ENCODE measurements at regions of chr5 and their contacts with region 1.

Region 1: GRCh38 chr5:32232441-32233219 is 58.5 kb upstream of the GOLPH3 start:
- DNase-seq: peak; percentile 67 to 80
- H3K4me3 ChIP-seq: no peak overlapping the region
- H3K4me3 Mint-ChIP-seq: no peak overlapping the region
- H3K27ac Mint-ChIP-seq: peak overlapping the region; percentile 64
- H3K4me1 ChIP-seq: peaks cover 40% of the 10 kb centered on the region
- H3K4me1 Mint-ChIP-seq: peaks cover 44% of the 10 kb centered on the region
- H3K27me3 ChIP-seq: no peaks in the 10 kb centered on the region
- H3K27me3 Mint-ChIP-seq: no peaks in the 10 kb centered on the region
- CTCF ChIP-seq: peak; percentile 73 to 81

Region 2: DNA sequence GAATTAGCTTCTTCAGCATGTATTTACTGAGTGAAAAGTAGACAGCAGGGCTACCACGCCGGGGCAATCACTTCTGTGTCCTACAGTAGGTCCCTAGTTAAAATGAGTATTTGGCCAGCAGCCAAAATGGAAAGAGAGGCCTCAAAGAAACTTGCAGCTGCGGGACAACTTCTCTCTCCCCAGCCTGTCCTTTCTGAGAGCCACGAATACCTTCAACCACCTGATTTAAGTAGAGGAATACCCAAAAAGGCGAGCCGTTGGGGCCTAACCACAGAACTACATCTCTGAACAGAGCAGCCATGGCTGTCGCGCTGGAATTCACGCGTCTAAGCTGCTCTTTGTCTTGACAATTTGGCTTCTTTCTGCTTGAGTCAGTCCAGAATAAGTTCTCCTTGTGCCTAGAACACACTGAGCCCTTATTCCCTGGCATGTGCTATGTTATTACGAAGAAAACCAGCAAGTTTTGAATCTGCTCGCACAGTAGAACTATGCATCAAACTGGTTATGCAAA is 14.7 kb before region 1 on chr5:
- CTCF ChIA-PET with region 1: no interaction called
- POLR2A ChIA-PET with region 1: no interaction called
- intact Hi-C with region 1: loop called (anchors 1 kb)
- DNase-seq: no peak
- H3K4me3 ChIP-seq: no peak overlapping the region
- H3K4me3 Mint-ChIP-seq: no peak overlapping the region
- H3K27ac Mint-ChIP-seq: no peak overlapping the region
- H3K4me1 ChIP-seq: peaks cover 4% of the 10 kb centered on the region
- H3K4me1 Mint-ChIP-seq: peaks cover 6% of the 10 kb centered on the region
- H3K27me3 ChIP-seq: no peaks in the 10 kb centered on the region
- H3K27me3 Mint-ChIP-seq: no peaks in the 10 kb centered on the region
- CTCF ChIP-seq: no peak

Region 3: GRCh38 chr5:32249646-32250045 is 17.0 kb after region 1 on chr5:
- CTCF ChIA-PET with region 1: interaction called, 10 read pairs
- POLR2A ChIA-PET with region 1: no interaction called
- intact Hi-C with region 1: loop called (anchors 1 kb)
- DNase-seq: peak; percentile 83 to 85
- H3K4me3 ChIP-seq: no peak overlapping the region
- H3K4me3 Mint-ChIP-seq: peak overlapping the region; percentile 65
- H3K27ac Mint-ChIP-seq: peak overlapping the region; percentile 87
- H3K4me1 ChIP-seq: peaks cover 28% of the 10 kb centered on the region
- H3K4me1 Mint-ChIP-seq: peaks cover 37% of the 10 kb centered on the region
- H3K27me3 ChIP-seq: no peaks in the 10 kb centered on the region
- H3K27me3 Mint-ChIP-seq: no peaks in the 10 kb centered on the region
- CTCF ChIP-seq: no peak

Region 4: GRCh38 chr5:32274548-32275395 is 42.1 kb after region 1 on chr5:
- CTCF ChIA-PET with region 1: no interaction called
- POLR2A ChIA-PET with region 1: interaction called, 3 read pairs
- intact Hi-C with region 1: loop called (anchors 1 kb)
- DNase-seq: no peak
- H3K4me3 ChIP-seq: no peak overlapping the region
- H3K4me3 Mint-ChIP-seq: no peak overlapping the region
- H3K27ac Mint-ChIP-seq: peak overlapping the region; percentile 52
- H3K4me1 ChIP-seq: peaks cover 26% of the 10 kb centered on the region
- H3K4me1 Mint-ChIP-seq: peaks cover 19% of the 10 kb centered on the region
- H3K27me3 ChIP-seq: no peaks in the 10 kb centered on the region
- H3K27me3 Mint-ChIP-seq: no peaks in the 10 kb centered on the region
- CTCF ChIP-seq: no peak

Region 5: DNA sequence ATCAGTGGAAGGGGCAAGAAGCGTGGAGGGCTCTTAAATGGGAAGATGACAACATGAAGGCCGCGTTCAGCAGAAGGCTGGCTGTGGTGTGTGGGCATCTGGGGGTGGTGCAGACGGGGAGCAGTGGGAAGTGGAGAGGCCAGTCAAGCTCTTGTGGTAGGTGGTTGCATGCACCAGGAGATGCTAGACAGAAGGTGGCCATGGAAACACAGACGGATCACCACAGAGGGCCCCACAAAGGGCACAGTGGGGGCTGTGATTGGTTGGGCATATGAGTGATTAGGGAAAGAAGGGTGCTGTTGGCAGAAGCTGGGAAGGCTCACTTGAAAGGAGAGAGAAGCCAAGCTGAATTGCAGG is 65.4 kb after region 1 on chr5:
- CTCF ChIA-PET with region 1: interaction called, 5 read pairs
- POLR2A ChIA-PET with region 1: no interaction called
- intact Hi-C with region 1: loop called (anchors 1 kb)
- DNase-seq: no peak
- H3K4me3 ChIP-seq: no peak overlapping the region
- H3K4me3 Mint-ChIP-seq: no peak overlapping the region
- H3K27ac Mint-ChIP-seq: no peak overlapping the region
- H3K4me1 ChIP-seq: peaks cover 4% of the 10 kb centered on the region
- H3K4me1 Mint-ChIP-seq: peaks cover under 1% of the 10 kb centered on the region
- H3K27me3 ChIP-seq: no peaks in the 10 kb centered on the region
- H3K27me3 Mint-ChIP-seq: no peaks in the 10 kb centered on the region
- CTCF ChIP-seq: no peak

Region 6: DNA sequence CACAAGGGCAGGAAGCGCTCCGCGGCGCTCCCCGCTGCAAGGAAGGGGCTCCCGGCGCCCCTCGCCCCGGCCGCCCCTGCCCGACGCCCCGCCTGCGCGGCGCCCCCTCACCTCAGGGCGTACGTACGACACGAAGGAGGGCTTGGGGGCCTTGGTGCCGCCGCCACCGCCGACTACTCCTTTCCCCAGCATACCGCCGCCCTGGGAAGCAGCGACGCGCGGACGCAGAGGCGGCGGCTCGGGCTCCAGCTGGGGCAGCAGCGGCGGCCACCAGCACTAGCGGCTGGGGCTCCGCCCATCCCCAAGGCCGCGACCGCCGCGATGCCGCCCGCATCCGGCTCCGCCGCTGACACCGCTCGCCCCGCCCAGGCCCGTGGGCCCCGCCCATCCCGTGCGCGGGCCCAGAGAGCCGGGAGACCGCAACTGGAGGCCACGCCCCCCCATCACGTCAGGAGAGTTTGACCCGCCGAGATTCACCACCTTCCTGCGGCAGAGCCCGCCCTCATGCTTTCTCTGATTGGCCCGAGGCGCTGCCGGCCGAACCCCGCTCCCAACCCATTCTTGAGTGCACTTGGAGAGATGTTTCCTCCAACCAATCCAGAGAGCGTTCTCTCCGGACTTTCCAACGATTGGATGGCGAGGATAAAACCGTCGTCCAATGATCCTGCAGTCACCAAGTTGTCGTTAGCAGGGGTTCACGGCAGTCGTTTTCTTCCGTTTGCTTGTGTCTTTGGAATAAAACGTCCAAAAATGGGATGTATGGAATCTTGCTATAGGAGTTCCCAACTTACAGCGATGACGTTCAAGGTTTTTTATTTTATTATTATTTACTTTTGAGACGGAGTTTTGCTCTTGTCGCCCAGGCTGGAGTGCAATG is 80.3 kb after region 1 on chr5 and contains the start of gene MTMR12:
- CTCF ChIA-PET with region 1: interaction called, 4 read pairs
- POLR2A ChIA-PET with region 1: no interaction called
- intact Hi-C with region 1: loop called (anchors 1 kb)
- DNase-seq: peak; percentile 99 to 100
- H3K4me3 ChIP-seq: peak within 1 kb of the TSS; percentile 89
- H3K4me3 Mint-ChIP-seq: peak within 1 kb of the TSS; percentile 78
- H3K27ac Mint-ChIP-seq: peak within 1 kb of the TSS; percentile 66
- H3K4me1 ChIP-seq: peaks cover 10% of the 10 kb centered on the region
- H3K4me1 Mint-ChIP-seq: peaks cover 21% of the 10 kb centered on the region
- H3K27me3 ChIP-seq: no peaks in the 10 kb centered on the region
- H3K27me3 Mint-ChIP-seq: no peaks in the 10 kb centered on the region
- CTCF ChIP-seq: no peak
- total RNA-seq, gene MTMR12: 35.1 and 35.7 TPM in 2 replicates

Region 7: DNA sequence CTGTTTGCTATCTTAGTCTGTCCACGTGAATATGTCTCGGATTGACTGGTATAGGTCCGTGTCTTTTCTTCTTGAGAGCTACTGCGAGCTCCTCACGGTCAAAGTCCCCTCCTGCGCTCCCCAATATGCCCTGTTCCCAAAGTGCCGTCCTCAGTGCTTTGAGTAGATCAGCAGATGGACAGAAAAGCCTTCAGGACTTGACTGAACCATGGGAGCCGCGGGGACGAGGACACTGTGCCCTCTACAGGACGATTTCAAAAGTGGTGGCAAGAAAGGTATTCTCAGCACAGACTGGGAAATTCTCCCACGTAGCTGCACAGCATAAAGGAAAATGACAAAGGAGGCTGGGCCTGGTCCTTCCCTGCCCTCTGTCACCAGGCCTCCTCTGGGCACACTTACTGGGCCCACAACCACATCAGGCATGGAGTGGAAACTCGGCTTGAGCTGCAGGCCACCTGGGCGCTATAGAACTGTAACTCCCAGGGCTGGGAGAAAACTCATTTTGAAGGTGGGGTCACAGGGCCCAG is 96.7 kb after region 1 on chr5:
- CTCF ChIA-PET with region 1: interaction called, 9 read pairs
- POLR2A ChIA-PET with region 1: no interaction called
- intact Hi-C with region 1: loop called (anchors 1 kb)
- DNase-seq: peak; percentile 61 to 68
- H3K4me3 ChIP-seq: no peak overlapping the region
- H3K4me3 Mint-ChIP-seq: no peak overlapping the region
- H3K27ac Mint-ChIP-seq: no peak overlapping the region
- H3K4me1 ChIP-seq: peaks cover 10% of the 10 kb centered on the region; the same call in 1 of the 2 replicates
- H3K4me1 Mint-ChIP-seq: peaks cover 16% of the 10 kb centered on the region
- H3K27me3 ChIP-seq: no peaks in the 10 kb centered on the region
- H3K27me3 Mint-ChIP-seq: no peaks in the 10 kb centered on the region
- CTCF ChIP-seq: peak; percentile 63 to 67